OCI-LY7 (cell line): ENCODE measurements at regions of chr15 and their contacts with region 1.

Region 1: DNA sequence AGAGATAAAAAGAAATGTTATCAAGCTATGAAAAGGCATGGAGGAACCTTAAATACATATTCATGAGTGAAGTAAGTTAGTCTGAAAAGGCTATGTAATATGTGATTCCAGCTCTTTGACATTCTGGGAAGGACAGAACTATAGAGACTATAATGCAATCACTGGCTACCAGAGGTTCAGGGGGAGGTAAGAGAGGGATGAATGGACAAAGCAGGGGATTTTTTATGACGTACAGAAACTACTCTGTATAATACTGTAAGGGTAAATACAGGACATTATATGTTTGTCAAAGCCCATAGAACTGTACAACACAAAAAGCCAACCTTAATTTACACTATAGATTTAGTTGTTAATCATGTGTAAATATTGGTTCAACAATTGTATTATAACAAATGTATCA is 46.1 kb downstream of the MCTP2 start:
- DNase-seq: no peak
- H3K4me3 ChIP-seq: no peak overlapping the region
- H3K27ac ChIP-seq: no peak overlapping the region
- H3K4me1 ChIP-seq: peaks cover 64% of the 10 kb centered on the region
- CTCF ChIP-seq: no peak

Region 2: DNA sequence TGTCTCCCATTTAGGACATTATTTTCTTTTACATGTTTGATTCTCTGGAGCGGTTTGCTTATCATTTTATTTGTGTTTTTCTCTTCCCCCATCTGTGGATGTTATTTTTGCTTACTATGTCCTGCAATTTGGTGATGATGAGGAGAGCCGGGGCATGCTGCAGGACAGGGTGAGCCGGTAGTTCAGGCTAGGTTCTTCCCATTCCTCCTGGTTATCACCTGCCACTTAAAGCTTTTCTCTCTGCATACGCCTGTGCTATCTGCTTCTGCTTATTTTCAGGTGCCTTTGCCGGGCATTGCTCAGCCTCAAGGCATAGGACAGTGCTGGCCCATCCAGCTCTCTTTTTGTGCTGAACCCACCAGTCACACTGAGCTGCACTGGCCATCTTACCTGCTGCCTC is 39.7 kb after region 1 on chr15:
- CTCF ChIA-PET with region 1: no interaction called
- POLR2A ChIA-PET with region 1: interaction called, 7 read pairs
- intact Hi-C with region 1: loop called (anchors 5 kb)
- DNase-seq: no peak
- H3K4me3 ChIP-seq: no peak overlapping the region
- H3K27ac ChIP-seq: no peak overlapping the region
- H3K4me1 ChIP-seq: peaks cover 14% of the 10 kb centered on the region
- CTCF ChIP-seq: no peak